ENCODE measurements at regions of chr1 and their contacts with region 1.

Region 1: DNA sequence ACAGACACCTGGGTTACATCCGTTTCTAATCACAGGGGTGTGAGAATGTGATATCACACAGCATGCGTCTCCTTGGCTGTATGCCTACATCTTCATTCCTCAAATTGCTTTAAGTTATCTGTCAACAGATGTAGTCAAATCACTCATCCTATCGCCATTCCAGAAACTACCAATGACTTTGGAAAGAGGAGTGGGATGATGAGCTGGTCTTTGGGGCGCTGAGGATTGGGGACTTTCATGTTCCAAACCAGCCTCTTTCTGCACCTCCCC is 104.8 kb downstream of the NAV1 start:
- DNase-seq: no peak
- H3K4me3 Mint-ChIP-seq: no peak overlapping the region
- H3K27ac Mint-ChIP-seq: no peak overlapping the region
- H3K4me1 Mint-ChIP-seq: no peaks in the 10 kb centered on the region
- H3K27me3 Mint-ChIP-seq: peaks cover 95% of the 10 kb centered on the region
- CTCF ChIP-seq: no peak

Region 2: GRCh38 chr1:200724064-200724463 is 919.7 kb before region 1 on chr1:
- CTCF ChIA-PET with region 1: no interaction called
- intact Hi-C with region 1: no loop called
- DNase-seq: no peak
- H3K4me3 Mint-ChIP-seq: no peak overlapping the region
- H3K27ac Mint-ChIP-seq: no peak overlapping the region
- H3K4me1 Mint-ChIP-seq: no peaks in the 10 kb centered on the region
- H3K27me3 Mint-ChIP-seq: no peaks in the 10 kb centered on the region
- CTCF ChIP-seq: no peak

Region 3: GRCh38 chr1:201582705-201583442 is 60.9 kb before region 1 on chr1:
- CTCF ChIA-PET with region 1: interaction called, 10 read pairs
- intact Hi-C with region 1: no loop called
- DNase-seq: no peak
- H3K4me3 Mint-ChIP-seq: no peak overlapping the region
- H3K27ac Mint-ChIP-seq: no peak overlapping the region
- H3K4me1 Mint-ChIP-seq: peaks cover 9% of the 10 kb centered on the region
- H3K27me3 Mint-ChIP-seq: peaks cover 80% of the 10 kb centered on the region
- CTCF ChIP-seq: no peak

Measured in Calu3 (cell line).